ENCODE measurements at regions of chr3 and their contacts with region 1.

Region 1: GRCh38 chr3:128879125-128879969 is at the start of gene ACAD9:
- DNase-seq: peak; percentile 98
- H3K4me3 Mint-ChIP-seq: peak within 1 kb of the TSS; percentile 85
- H3K27ac Mint-ChIP-seq: peak within 1 kb of the TSS; percentile 86
- H3K4me1 Mint-ChIP-seq: peaks cover 64% of the 10 kb centered on the region
- H3K27me3 Mint-ChIP-seq: peaks cover 3% of the 10 kb centered on the region
- total RNA-seq, gene ACAD9: 42.7 to 48.4 TPM

Region 2: GRCh38 chr3:128617557-128618397 is 261.6 kb before region 1 on chr3:
- CTCF ChIA-PET with region 1: interaction called, 19 read pairs
- POLR2A ChIA-PET with region 1: interaction called, 11 read pairs
- DNase-seq: peak; percentile 99
- H3K4me3 Mint-ChIP-seq: peak overlapping the region; percentile 94
- H3K27ac Mint-ChIP-seq: peak overlapping the region; percentile 88
- H3K4me1 Mint-ChIP-seq: peaks cover 51% of the 10 kb centered on the region
- H3K27me3 Mint-ChIP-seq: no peaks in the 10 kb centered on the region

Region 3: GRCh38 chr3:128725932-128726690 is 153.2 kb before region 1 on chr3 and contains the start of gene RAB7A:
- CTCF ChIA-PET with region 1: no interaction called
- POLR2A ChIA-PET with region 1: interaction called, 19 read pairs
- DNase-seq: peak; percentile 98
- H3K4me3 Mint-ChIP-seq: peak within 1 kb of the TSS; percentile 85
- H3K27ac Mint-ChIP-seq: peak within 1 kb of the TSS; percentile 89
- H3K4me1 Mint-ChIP-seq: peaks cover 50% of the 10 kb centered on the region
- H3K27me3 Mint-ChIP-seq: peaks cover 5% of the 10 kb centered on the region
- total RNA-seq, gene RAB7A: 213 to 225 TPM

Region 4: GRCh38 chr3:128835096-128835495 is 44.3 kb before region 1 on chr3:
- CTCF ChIA-PET with region 1: no interaction called
- POLR2A ChIA-PET with region 1: no interaction called
- DNase-seq: no peak
- H3K4me3 Mint-ChIP-seq: no peak overlapping the region
- H3K27ac Mint-ChIP-seq: no peak overlapping the region
- H3K4me1 Mint-ChIP-seq: no peaks in the 10 kb centered on the region
- H3K27me3 Mint-ChIP-seq: peaks cover 3% of the 10 kb centered on the region

Region 5: DNA sequence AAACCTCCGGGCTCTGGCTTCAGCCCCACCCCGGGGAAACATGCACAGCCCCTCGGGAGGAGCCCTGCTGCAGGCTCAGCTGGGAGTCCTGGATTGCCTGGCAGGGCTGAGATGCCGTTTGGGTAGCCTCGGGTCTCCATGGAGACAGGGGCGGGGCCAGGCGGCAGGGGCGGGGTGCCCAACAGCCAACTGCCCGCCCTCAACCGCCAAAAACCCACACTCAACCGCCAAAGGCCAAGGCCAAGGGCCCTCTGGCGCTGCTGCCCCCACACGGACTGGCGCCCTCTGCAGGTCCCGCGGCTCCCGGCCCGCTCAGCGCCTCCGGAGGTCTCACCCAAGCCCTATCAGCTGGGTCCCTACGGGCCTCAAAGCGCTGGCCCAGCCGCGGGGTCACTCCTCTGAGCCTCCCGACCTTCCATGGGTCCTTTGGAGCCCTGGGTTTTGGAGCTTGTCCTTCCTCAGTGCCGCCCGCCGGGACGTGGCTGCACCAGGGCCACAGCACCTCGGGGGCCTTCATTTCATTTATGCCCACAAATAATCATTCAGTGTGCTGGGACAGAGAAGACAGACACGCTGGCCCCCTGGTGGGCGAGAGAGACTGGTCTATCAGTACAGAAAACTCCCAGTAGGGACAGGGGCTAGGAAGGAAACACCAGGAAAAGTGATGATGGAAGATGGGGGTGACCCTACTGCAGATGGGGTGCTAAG is 33.4 kb before region 1 on chr3:
- CTCF ChIA-PET with region 1: interaction called, 7 read pairs
- POLR2A ChIA-PET with region 1: interaction called, 22 read pairs
- DNase-seq: peak; percentile 87
- H3K4me3 Mint-ChIP-seq: peak overlapping the region; percentile 55
- H3K27ac Mint-ChIP-seq: peak overlapping the region; percentile 53
- H3K4me1 Mint-ChIP-seq: peaks cover 16% of the 10 kb centered on the region
- H3K27me3 Mint-ChIP-seq: peaks cover 2% of the 10 kb centered on the region

Region 6: DNA sequence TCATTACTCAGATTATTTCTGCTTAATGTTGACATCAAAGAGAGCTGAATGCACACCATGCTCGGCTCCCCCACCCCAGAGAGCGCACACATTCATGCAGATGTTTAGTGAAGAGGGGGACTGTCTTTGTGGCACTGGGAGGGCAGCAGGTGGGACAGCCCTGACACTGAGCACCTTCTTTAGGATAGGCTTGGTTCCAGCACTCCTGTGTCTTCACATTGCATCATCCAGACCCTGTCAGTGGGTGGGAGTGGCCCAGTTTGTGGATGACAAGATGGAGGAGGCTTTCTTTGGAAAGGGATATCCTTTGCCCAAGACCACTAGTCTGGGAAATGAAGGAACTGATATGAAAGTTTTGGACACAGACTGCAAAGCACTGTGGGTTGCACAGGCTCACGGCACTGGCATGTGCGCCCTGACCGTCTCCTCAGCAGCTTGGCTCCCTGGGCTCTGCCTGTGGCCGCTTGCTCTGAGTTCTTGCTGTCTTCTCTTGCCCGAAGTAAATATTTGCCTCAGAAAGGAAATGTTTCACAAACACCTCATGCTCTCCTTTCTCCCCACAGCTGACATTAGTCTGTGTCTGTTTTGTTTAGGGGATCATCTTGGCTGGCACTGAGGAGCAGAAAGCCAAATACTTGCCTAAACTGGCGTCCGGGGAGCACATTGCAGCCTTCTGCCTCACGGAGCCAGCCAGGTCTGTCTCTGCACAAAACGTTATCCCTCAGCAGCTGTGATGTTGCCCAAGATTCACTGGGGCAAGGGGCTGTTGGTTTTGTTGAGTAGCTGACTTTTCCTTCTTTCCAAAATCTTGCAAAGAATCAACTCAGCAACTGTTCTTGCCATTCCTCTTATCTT is 16.7 kb after region 1 on chr3:
- CTCF ChIA-PET with region 1: interaction called, 5 read pairs
- POLR2A ChIA-PET with region 1: interaction called, 13 read pairs
- DNase-seq: no peak
- H3K4me3 Mint-ChIP-seq: no peak overlapping the region
- H3K27ac Mint-ChIP-seq: peak overlapping the region; percentile 50
- H3K4me1 Mint-ChIP-seq: peaks cover 11% of the 10 kb centered on the region
- H3K27me3 Mint-ChIP-seq: no peaks in the 10 kb centered on the region

Measured in activated CD4-positive, alpha-beta memory T cell treated with anti-CD3 and anti-CD28 coated beads, Interleukin-2, amount 10 ng/mL, durations not matched to agents 7 days and 5 days (primary cell).